Naive thymus-derived CD4-positive, alpha-beta T cell (primary cell): ENCODE measurements at regions of chr10 and their contacts with region 1.

Region 1: DNA sequence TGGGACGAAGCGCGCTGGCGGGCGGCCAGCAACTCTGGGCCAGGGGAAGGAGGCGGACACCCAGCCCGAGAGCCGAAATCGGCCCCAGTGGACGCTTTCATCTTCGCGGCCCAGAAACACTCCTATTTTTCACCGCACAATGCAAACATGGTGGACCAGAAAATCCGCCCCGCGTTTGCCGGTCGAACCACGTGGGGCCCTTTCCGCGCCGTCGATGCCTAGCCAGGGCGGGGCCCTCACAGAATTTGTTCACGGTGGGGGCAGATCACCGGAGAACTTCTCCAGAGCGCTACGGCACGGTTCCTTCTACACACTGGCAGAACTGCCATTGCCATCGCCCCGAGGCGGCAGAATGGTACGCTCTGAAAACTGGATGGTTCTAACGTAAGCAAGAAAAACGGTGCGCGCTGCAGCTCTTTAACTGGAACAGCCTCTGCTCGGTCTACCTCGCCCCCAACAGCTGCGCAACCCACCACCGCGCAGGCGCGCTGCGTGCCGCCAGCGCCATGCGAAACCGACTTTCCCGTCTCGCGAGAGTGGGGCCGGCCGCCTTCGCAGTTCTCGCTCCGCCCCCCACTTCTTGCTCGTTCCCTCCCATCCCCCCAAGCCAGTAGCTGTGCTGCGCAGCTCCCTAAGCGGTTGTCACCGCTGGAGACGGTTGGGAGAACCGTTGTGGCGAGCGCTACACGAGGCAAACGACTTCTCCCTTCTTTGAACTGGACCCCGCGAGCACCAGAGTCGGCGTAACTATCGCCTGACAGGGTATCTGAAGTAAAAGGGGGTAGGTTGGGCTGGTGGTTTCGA is at the start of gene HNRNPH3:
- DNase-seq: peak; percentile 97 to 99 (median 99)
- ATAC-seq: peak; percentile 86
- H3K4me3 ChIP-seq: peak within 1 kb of the TSS; percentile 92
- H3K4me3 Mint-ChIP-seq: peak within 1 kb of the TSS; percentile 94 to 100 (median 100)
- H3K27ac ChIP-seq: peak within 1 kb of the TSS; percentile 99
- H3K27ac Mint-ChIP-seq: peak within 1 kb of the TSS; percentile 98 to 100 (median 100)
- H3K4me1 ChIP-seq: peaks cover 15 to 21% of the 10 kb centered on the region in 2 donors
- H3K4me1 Mint-ChIP-seq: peaks cover 40 to 65% (median 53%) of the 10 kb centered on the region in 7 donors
- H3K27me3 ChIP-seq: no peaks in the 10 kb centered on the region
- H3K27me3 Mint-ChIP-seq: peaks cover 0 to 4% (median 0%) of the 10 kb centered on the region in 5 donors
- total RNA-seq, gene HNRNPH3: 125 to 190 (median 156) TPM

Region 2: DNA sequence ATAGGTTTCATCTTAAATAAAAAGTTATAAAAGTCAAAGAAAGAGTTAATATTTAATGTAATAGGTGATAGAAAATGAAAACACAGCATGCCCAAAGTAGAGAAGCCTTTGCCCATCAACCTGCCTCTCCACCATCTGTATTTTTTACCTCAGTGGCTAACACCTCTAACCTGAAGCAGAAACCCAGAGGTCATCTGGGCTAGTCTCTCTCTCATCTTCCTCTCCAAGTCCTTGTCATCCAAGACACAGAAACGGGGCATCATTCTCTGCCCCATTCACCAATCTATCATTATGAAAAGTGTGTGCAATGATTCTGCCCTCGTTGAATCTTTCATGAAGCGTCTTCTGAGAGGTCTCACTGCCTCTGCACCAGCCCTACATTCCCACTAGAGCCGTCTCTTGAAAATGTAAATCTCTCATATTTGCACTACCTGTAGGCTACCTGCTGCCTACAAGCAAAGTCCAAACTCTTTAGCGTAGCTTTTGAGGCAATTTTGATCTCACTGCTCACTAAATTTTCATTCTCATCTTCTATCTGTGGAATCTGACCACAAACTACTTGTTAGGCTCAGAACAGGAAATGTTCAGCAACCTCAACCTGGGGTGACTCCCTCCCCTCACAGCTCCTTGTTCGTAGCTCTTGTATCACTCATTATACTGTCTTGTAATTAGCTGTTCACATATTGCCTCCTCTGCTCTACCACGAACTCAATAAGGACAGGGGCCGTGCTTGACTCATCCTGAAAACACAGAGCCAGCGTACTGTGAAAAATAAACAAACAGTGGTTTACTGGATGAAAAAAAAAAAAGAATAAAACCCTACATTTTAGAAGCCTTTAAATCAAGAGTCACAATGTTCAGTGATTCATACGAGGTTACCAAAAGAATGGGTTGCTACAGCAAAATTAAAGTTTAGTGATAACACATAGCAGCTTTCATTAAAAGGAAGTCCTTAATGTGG is 718.8 kb before region 1 on chr10:
- CTCF ChIA-PET with region 1: no interaction called
- POLR2A ChIA-PET with region 1: no interaction called
- intact Hi-C with region 1: loop called in 1 of 2 experiments (anchors 10 kb)
- DNase-seq: peak in 8 of 9 donors; percentile 53 to 82 (median 73)
- ATAC-seq: peak; percentile 97
- H3K4me3 ChIP-seq: peak overlapping the region; percentile 36
- H3K4me3 Mint-ChIP-seq: peak overlapping the region; percentile 64 to 83 (median 75)
- H3K27ac ChIP-seq: no peak overlapping the region
- H3K27ac Mint-ChIP-seq: peak overlapping the region; percentile 8 to 88 (median 79)
- H3K4me1 ChIP-seq: peaks cover 17 to 24% of the 10 kb centered on the region in 2 donors
- H3K4me1 Mint-ChIP-seq: peaks cover 23 to 44% (median 33%) of the 10 kb centered on the region in 7 donors
- H3K27me3 ChIP-seq: no peaks in the 10 kb centered on the region
- H3K27me3 Mint-ChIP-seq: peaks cover 0 to 29% (median 0%) of the 10 kb centered on the region in 5 donors

Region 3: GRCh38 chr10:67884313-67884841 is 447.3 kb before region 1 on chr10 and contains the start of gene SIRT1:
- CTCF ChIA-PET with region 1: no interaction called
- POLR2A ChIA-PET with region 1: interaction called, 54 read pairs
- intact Hi-C with region 1: loop called (anchors 1 kb)
- DNase-seq: peak; percentile 87 to 95 (median 90)
- ATAC-seq: peak; percentile 89
- H3K4me3 ChIP-seq: peak within 1 kb of the TSS; percentile 75
- H3K4me3 Mint-ChIP-seq: peak within 1 kb of the TSS; percentile 86 to 98 (median 95)
- H3K27ac ChIP-seq: peak within 1 kb of the TSS; percentile 83
- H3K27ac Mint-ChIP-seq: peak within 1 kb of the TSS; percentile 90 to 98 (median 95)
- H3K4me1 ChIP-seq: peaks cover 12 to 16% of the 10 kb centered on the region in 2 donors
- H3K4me1 Mint-ChIP-seq: peaks cover 27 to 43% (median 35%) of the 10 kb centered on the region in 7 donors
- H3K27me3 ChIP-seq: no peaks in the 10 kb centered on the region
- H3K27me3 Mint-ChIP-seq: peaks cover 0 to 5% (median 0%) of the 10 kb centered on the region in 5 donors
- total RNA-seq, gene SIRT1: 25.9 to 66.8 (median 59.5) TPM

Region 4: GRCh38 chr10:68251625-68252495 is 79.8 kb before region 1 on chr10:
- CTCF ChIA-PET with region 1: no interaction called
- POLR2A ChIA-PET with region 1: no interaction called
- intact Hi-C with region 1: no loop called
- DNase-seq: no peak
- ATAC-seq: no peak
- H3K4me3 ChIP-seq: no peak overlapping the region
- H3K4me3 Mint-ChIP-seq: no peak overlapping the region
- H3K27ac ChIP-seq: no peak overlapping the region
- H3K27ac Mint-ChIP-seq: no peak overlapping the region
- H3K4me1 ChIP-seq: no peaks in the 10 kb centered on the region
- H3K4me1 Mint-ChIP-seq: peaks cover 0 to 3% (median 0%) of the 10 kb centered on the region in 7 donors
- H3K27me3 ChIP-seq: no peaks in the 10 kb centered on the region
- H3K27me3 Mint-ChIP-seq: peaks cover 0 to 9% (median 6%) of the 10 kb centered on the region in 5 donors

Region 5: DNA sequence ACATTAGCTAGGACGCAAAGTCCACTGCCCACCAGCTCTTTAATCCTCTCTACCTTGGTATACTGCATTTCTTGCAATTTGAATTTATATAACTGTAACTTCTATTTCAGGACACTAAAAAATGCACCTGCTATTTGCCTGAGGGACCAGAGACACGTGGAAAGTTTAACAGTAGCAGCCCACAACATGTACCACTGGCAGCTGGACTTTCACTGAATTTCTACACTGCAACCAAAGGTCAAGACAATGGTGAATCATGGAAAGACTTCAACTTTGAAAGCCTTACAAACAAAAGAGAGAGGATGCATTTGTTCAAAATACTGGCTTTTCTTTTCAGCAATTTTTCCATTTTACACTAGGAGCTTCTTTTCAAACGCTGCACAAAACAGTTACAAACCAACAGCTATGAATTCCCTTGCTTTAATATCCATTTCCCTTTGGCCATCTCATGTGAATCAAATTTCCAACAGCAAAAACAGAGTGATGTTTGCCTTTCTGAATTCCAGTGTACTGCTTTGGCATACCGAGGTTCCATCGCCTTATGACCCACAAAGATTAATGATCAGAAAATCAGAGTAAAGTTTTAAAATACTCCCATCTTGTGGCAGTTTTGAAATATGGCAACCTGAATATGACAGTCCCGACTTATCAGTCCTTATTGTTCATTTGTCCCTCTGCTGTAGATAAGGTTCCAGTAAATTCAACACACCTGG is 29.7 kb before region 1 on chr10:
- CTCF ChIA-PET with region 1: interaction called, 5 read pairs
- POLR2A ChIA-PET with region 1: interaction called, 3 read pairs
- intact Hi-C with region 1: loop called in 1 of 2 experiments (anchors 1 kb)
- DNase-seq: peak in 5 of 9 donors; percentile 12 to 38 (median 24)
- ATAC-seq: peak; percentile 66
- H3K4me3 ChIP-seq: no peak overlapping the region
- H3K4me3 Mint-ChIP-seq: no peak overlapping the region
- H3K27ac ChIP-seq: no peak overlapping the region
- H3K27ac Mint-ChIP-seq: no peak overlapping the region
- H3K4me1 ChIP-seq: no peaks in the 10 kb centered on the region
- H3K4me1 Mint-ChIP-seq: peaks cover 0 to 4% (median 0%) of the 10 kb centered on the region in 7 donors
- H3K27me3 ChIP-seq: no peaks in the 10 kb centered on the region
- H3K27me3 Mint-ChIP-seq: no peaks in the 10 kb centered on the region

Region 6: GRCh38 chr10:68406815-68407548 is 75.3 kb after region 1 on chr10 and contains the start of gene RUFY2:
- CTCF ChIA-PET with region 1: interaction called, 3 read pairs
- POLR2A ChIA-PET with region 1: interaction called, 4 read pairs
- intact Hi-C with region 1: loop called (anchors 1 to 2 kb)
- DNase-seq: peak; percentile 61 to 91 (median 74)
- ATAC-seq: peak; percentile 98
- H3K4me3 ChIP-seq: peak within 1 kb of the TSS; percentile 73
- H3K4me3 Mint-ChIP-seq: peak within 1 kb of the TSS; percentile 85 to 96 (median 89)
- H3K27ac ChIP-seq: peak within 1 kb of the TSS; percentile 76
- H3K27ac Mint-ChIP-seq: peak within 1 kb of the TSS; percentile 62 to 90 (median 81)
- H3K4me1 ChIP-seq: peaks cover 3 to 7% of the 10 kb centered on the region in 2 donors
- H3K4me1 Mint-ChIP-seq: peaks cover 10 to 19% (median 17%) of the 10 kb centered on the region in 7 donors
- H3K27me3 ChIP-seq: no peaks in the 10 kb centered on the region
- H3K27me3 Mint-ChIP-seq: no peaks in the 10 kb centered on the region
- total RNA-seq, gene RUFY2: 15.1 to 24.7 (median 20.4) TPM

Region 7: GRCh38 chr10:68901104-68901927 is 569.7 kb after region 1 on chr10 and contains the start of gene DDX50:
- CTCF ChIA-PET with region 1: no interaction called
- POLR2A ChIA-PET with region 1: interaction called, 5 read pairs
- intact Hi-C with region 1: loop called (anchors 1 kb)
- DNase-seq: peak; percentile 86 to 97 (median 95)
- ATAC-seq: peak; percentile 98
- H3K4me3 ChIP-seq: peak within 1 kb of the TSS; percentile 78
- H3K4me3 Mint-ChIP-seq: peak within 1 kb of the TSS; percentile 93 to 99 (median 97)
- H3K27ac ChIP-seq: peak within 1 kb of the TSS; percentile 95
- H3K27ac Mint-ChIP-seq: peak within 1 kb of the TSS; percentile 97 to 100 (median 99)
- H3K4me1 ChIP-seq: peaks cover 20 to 34% of the 10 kb centered on the region in 2 donors
- H3K4me1 Mint-ChIP-seq: peaks cover 28 to 53% (median 44%) of the 10 kb centered on the region in 7 donors
- H3K27me3 ChIP-seq: no peaks in the 10 kb centered on the region
- H3K27me3 Mint-ChIP-seq: no peaks in the 10 kb centered on the region
- total RNA-seq, gene DDX50: 28.3 to 49.3 (median 47.5) TPM